Vagina (tissue), 2 donors: ENCODE measurements at regions of chr22 and their contacts with region 1.

Region 1: DNA sequence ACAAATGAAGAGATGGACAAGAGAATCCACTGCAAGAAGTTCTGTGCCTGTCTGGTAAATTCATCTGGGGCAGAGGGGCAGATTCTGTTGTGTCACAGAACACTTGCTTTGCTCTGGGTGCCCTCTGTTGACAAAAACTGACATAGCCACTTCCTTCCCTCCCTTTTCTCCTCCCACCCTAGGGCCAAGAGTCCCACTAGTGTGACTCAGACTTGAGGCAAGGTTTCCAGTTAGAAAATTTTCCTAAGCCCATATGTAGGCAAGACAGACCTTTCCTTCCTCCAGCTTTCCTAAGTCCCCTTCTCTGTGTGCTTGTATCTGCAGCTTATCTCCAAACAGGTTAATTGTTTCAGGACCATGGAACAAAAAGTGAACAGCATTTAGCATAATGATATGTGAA is 106.8 kb downstream of the RBFOX2 start:
- DNase-seq: no peak
- H3K4me3 ChIP-seq: no peak overlapping the region
- H3K27ac ChIP-seq: peak overlapping the region; percentile 64
- H3K4me1 ChIP-seq: peaks cover 61% of the 10 kb centered on the region
- H3K27me3 ChIP-seq: no peaks in the 10 kb centered on the region
- CTCF ChIP-seq: peak in 2 of 3 experiments; percentile 43 to 48
- POLR2A ChIP-seq: no peak

Region 2: DNA sequence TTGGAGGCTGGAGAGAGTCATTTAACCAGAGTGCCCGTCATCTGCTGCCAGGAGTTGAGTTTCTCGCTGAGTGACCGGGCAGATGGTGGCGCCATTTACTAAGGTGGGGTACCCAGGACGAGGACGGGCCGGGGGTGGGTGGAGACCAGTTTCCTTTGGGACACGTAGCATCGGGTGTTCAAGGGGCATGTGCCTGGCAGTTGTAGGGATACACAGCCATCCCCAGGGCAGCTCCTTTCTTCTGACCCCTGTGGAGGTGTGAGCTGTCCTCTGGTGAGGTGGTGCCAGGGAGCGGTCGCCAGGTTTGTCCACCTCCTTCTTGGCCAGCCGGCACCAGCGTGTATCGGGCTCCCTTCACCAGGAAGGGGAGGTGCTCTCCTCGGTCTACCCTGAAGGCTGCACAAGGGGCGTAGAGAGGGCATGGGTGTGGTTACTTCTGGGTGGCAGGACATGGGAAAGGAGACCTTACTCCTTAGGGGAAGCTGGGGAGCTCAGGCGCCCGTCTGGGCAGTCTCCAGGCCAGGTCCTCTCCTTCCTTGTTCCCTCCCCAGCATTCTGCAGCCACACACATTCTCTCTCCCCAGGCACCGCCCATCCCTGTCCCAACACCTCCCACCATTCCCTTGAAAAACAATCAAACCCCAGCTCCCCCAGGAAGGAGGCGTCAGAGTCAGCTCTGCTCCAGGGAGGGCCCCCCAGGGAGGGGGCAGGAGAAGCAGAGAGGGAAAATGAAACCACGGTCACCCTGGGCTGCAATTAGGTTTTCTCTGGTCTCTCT is 294.3 kb before region 1 on chr22:
- intact Hi-C with region 1: loop called (anchors 2 kb)
- DNase-seq: peak in 1 of 2 donors; percentile 92
- H3K4me3 ChIP-seq: peak overlapping the region; percentile 53 to 60
- H3K27ac ChIP-seq: peak overlapping the region; percentile 88
- H3K4me1 ChIP-seq: peaks cover 39% of the 10 kb centered on the region
- H3K27me3 ChIP-seq: no peaks in the 10 kb centered on the region
- CTCF ChIP-seq: peak in 1 of 3 experiments; percentile 34
- POLR2A ChIP-seq: peak in 1 of 2 donors; percentile 15

Region 3: DNA sequence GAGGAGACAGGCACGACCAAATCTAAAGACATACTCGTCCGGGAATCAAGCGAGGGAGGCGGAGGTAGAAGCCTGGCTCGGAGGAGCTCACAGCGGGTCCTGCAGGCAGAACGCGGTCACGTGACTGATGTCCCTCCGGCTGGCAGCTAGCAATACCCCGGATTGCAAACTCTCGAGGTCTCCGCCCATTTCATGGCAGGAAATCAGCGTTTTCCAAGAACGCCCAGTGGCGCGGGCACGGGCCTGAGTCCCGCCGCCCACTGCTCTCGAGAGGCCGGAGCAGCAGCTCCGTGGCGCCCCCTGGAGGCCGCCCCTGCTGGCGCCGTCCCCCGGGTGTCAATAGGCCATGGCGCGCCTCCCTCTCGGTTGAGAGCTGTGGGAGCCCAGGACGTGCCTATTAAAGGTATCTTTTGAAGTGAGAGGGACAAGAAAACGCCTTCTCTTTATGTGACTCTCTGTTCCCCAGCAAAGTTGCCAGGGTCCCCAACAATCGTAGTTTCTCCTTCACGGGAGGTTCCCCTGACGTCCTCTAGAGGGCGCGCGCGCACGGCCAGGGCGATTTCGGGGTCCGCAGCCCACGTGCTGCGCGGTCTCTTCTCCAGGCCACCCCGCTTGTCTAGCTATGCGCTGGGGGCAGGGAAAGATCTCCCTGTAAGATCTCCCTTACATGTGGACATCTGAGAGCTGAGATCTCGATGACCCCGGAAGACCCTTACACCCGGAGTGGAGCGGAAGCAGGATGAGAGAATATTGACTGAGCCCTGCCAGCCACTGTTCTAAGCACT is 144.2 kb after region 1 on chr22:
- intact Hi-C with region 1: loop called (anchors 10 kb)
- DNase-seq: peak in 1 of 2 donors; percentile 93
- H3K4me3 ChIP-seq: peak overlapping the region; percentile 44 to 59
- H3K27ac ChIP-seq: peak overlapping the region; percentile 91
- H3K4me1 ChIP-seq: no peaks in the 10 kb centered on the region
- H3K27me3 ChIP-seq: no peaks in the 10 kb centered on the region
- CTCF ChIP-seq: peak; percentile 98 to 100 (median 99)
- POLR2A ChIP-seq: no peak

Region 4: GRCh38 chr22:36077271-36077670 is 155.5 kb after region 1 on chr22:
- intact Hi-C with region 1: no loop called
- DNase-seq: no peak
- H3K4me3 ChIP-seq: no peak overlapping the region
- H3K27ac ChIP-seq: no peak overlapping the region
- H3K4me1 ChIP-seq: no peaks in the 10 kb centered on the region
- H3K27me3 ChIP-seq: no peaks in the 10 kb centered on the region
- CTCF ChIP-seq: no peak
- POLR2A ChIP-seq: no peak